WTC11 (cell line): ENCODE measurements at regions of chr1 and their contacts with region 1.

Region 1: DNA sequence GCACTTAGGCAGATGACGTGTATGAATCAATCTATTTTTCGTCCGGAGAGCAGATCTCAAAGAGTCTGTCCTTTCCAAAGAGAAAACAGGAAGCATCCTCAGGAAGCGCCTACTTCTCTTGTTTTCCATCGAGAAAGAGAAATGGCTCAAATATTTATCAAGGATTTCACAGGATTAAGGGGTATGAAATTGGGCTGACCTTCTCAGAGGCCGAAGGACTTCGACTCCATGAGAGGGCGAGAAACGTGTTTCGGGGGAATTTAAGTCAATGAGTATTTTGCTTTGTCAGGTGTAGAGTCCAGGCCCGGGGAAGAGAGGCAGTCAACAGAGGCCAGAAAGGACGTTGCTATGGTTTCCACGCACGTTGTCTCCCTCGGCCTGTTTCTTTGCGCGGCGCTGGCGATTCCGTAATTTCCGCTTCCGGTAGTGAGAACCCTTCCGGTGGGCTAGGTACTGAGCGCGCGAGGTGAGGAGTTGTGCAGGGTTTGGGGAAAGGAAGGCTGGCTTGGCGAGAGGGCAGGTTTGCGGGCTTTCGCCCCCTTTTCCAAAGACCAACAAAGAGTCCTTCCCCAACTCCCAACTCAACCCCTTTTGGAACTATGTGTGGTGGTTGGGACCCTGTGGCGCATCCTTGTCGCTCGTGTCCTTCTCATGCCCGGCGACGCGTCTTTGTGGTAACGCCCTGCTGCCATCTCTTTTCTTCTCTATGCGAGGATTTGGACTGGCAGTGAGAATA is at the start of gene MRPS21:
- DNase-seq: peak; percentile 85
- ATAC-seq: peak; percentile 98
- H3K4me3 Mint-ChIP-seq: peak within 1 kb of the TSS; percentile 94
- H3K27ac Mint-ChIP-seq: peak within 1 kb of the TSS; percentile 96
- H3K4me1 Mint-ChIP-seq: peaks cover 25% of the 10 kb centered on the region
- H3K27me3 Mint-ChIP-seq: peaks cover 2% of the 10 kb centered on the region; the same call in 1 of the 2 replicates
- CTCF ChIP-seq: no peak
- total RNA-seq, gene MRPS21: 100 to 105 TPM (median 100 TPM) in 3 replicates

Region 2: DNA sequence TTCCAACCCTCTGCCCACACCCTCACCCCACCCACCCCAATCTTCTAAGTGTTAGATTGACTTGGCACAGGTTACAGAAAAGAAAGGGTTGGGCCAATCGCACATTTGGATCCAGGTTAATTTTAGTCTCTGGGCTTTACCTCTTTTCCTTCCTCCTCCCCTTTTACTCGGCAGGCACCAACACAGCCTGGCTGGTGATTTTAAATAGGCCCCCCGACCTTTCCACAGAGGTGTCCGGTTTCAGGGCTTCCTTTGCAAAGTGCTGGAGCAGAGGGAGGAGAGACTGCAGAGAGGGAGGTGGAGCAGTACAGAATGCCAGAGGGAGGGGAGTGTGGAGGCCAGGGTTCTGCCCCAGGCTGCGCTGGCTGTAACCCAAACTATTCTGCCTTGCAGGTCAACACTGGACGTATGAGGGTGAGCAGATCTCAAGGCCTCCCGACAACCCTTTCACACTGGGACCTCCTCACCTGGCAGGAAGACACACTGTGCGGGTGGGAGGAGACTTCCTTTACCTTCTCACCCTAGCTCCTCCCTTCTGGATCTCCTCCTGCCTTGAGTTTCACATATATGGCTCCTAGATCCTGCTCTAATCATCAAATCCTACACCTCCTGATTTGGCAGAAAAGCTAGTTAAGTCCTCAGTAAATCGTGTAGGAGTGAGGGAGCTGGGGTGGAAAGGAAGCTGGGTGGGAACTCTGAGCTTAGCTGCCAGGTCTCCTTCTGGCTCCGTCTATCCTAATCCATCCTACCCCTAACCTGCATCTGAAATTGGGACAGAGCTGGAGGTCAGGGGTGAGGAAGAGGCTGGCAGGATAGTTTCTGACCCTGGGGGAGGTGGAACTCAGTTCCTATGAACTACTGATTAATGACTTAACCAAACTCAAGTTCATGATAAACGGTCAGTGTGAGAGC is 33.6 kb before region 1 on chr1:
- CTCF ChIA-PET with region 1: interaction called, 4 read pairs
- POLR2A ChIA-PET with region 1: interaction called, 10 read pairs
- DNase-seq: peak; percentile 79
- ATAC-seq: peak; percentile 83
- H3K4me3 Mint-ChIP-seq: peak overlapping the region; percentile 83
- H3K27ac Mint-ChIP-seq: peak overlapping the region; percentile 95
- H3K4me1 Mint-ChIP-seq: peaks cover 44% of the 10 kb centered on the region
- H3K27me3 Mint-ChIP-seq: no peaks in the 10 kb centered on the region
- CTCF ChIP-seq: no peak

Region 3: DNA sequence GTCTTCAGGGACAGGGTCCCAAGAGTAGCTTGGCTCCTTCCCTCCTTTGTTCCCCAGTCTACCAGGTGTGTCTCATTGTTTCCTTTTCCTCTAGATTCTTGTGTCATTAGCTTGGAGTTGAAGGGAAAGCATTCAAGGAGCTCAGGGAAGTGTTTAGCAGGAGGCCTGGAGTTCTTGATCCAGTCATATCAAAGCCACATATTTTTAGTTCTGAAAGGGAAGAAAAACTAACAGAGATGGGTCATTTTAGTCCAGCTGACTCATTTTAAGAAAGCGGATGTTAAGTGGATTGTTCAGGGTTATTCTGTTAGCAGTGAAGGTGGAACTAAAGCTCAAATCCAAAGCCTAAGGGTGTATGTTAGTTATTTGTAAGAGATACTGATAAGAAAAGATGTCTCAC is 20.3 kb before region 1 on chr1:
- CTCF ChIA-PET with region 1: no interaction called
- POLR2A ChIA-PET with region 1: no interaction called
- DNase-seq: no peak
- ATAC-seq: no peak
- H3K4me3 Mint-ChIP-seq: peak overlapping the region; percentile 68
- H3K27ac Mint-ChIP-seq: peak overlapping the region; percentile 61
- H3K4me1 Mint-ChIP-seq: peaks cover 33% of the 10 kb centered on the region
- H3K27me3 Mint-ChIP-seq: no peaks in the 10 kb centered on the region
- CTCF ChIP-seq: no peak